ENCODE measurements at regions of chr16 and their contacts with region 1.

Region 1: DNA sequence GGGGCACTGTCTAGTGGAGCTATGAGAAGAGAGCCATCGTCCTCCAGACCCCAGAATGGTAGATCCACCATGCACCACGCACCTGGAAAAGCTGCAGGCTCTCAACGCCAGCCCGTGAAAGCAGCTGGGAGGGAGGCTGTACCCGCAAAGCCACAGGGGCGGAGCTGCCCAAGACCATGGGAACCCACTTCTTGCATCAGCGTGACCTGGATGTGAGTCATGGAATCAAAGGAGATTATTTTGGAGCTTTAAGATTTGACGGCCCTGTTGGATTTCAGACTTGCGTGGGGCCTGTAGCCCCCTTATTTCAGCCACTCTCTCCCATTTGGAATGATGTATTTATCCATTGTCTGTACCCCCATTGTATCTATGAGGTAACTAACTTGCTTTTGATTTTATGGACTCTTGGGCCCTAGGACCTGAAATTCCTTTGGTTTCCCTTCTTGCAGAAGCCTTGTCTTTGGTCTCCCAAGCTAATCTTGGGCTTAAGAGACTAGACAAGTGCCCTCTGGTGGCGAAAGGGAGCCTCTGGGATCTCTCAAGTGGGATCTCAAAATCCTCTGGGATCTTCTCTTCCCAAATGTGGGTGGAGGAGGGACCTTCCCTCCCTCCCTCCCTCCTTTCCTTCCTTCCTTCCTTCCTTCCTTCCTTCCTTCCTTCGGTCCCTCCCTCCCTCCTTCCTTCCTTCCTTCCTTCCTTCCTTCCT is 58.2 kb upstream of the HAPSTR1 start:
- DNase-seq: peak; percentile 83
- H3K4me3 Mint-ChIP-seq: no peak overlapping the region
- H3K27ac Mint-ChIP-seq: no peak overlapping the region
- H3K4me1 Mint-ChIP-seq: no peaks in the 10 kb centered on the region
- H3K27me3 Mint-ChIP-seq: no peaks in the 10 kb centered on the region
- CTCF ChIP-seq: peak; percentile 35

Region 2: DNA sequence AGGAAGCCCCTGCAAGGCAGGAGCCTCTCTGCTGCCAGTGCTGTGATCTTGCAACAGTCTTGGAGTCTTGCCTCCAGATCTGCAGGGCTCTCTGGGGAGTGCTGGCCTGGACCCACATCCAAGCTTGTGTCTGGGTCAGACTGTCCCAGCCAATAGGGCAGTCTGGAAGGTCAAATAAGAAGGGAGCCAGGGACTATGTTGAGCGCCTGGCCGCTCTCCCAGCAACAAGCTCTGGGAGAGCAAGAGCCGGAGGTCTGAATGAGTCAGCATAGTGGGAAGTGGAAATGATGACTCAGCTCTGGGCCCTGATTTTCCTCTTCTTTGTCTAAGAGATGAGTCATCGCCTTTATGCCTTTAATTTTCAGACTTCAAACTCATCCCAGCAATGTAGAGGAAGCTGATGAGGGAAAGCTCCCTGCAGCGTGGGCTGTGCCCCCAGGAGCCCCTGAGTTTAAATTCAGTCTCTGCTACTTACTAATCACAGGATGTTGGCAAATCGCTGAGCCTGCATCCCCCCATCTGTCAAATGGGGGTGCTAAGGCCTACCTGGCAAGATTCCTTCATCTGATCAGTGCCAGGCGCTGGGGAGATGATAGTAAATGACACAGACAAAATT is 14.5 kb after region 1 on chr16:
- CTCF ChIA-PET with region 1: interaction called, 15 read pairs
- POLR2A ChIA-PET with region 1: interaction called, 4 read pairs
- intact Hi-C with region 1: no loop called
- DNase-seq: peak; percentile 99
- H3K4me3 Mint-ChIP-seq: no peak overlapping the region
- H3K27ac Mint-ChIP-seq: peak overlapping the region; percentile 72
- H3K4me1 Mint-ChIP-seq: peaks cover 15% of the 10 kb centered on the region
- H3K27me3 Mint-ChIP-seq: no peaks in the 10 kb centered on the region
- CTCF ChIP-seq: no peak